Mammary epithelial cell (primary cell): ENCODE measurements at regions of chr18 and their contacts with region 1.

Region 1: DNA sequence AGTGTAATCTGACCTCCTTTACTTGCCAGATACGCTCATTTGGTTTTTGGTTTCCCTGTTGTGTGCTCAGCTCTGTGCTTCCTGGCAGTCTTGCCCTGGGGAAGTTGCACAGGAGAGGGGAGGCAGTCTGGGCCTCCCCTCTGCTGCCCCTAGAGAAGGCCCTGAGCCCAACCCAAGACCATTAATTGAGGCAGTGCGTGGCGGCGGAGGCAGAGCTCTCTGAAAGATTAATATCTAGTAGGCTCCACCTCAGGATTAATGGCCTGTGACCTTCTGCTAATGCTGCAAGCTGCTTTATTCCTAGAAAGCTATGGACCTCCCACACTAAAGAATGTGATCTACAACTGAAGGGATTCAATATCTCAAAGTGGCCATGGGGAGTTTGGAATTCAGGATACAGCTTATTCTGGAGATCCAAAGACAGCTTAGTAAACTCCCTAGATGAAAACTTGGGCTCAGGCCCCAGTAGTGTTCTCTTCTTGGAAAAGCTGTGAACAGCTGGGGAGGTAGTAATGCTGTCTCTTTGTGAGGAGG is 41.4 kb upstream of the MAPRE2 start:
- DNase-seq: no peak
- H3K4me3 ChIP-seq: no peak overlapping the region
- H3K27ac ChIP-seq: no peak overlapping the region
- H3K4me1 ChIP-seq: no peaks in the 10 kb centered on the region
- H3K27me3 ChIP-seq: peaks cover 2% of the 10 kb centered on the region
- CTCF ChIP-seq: no peak

Region 2: DNA sequence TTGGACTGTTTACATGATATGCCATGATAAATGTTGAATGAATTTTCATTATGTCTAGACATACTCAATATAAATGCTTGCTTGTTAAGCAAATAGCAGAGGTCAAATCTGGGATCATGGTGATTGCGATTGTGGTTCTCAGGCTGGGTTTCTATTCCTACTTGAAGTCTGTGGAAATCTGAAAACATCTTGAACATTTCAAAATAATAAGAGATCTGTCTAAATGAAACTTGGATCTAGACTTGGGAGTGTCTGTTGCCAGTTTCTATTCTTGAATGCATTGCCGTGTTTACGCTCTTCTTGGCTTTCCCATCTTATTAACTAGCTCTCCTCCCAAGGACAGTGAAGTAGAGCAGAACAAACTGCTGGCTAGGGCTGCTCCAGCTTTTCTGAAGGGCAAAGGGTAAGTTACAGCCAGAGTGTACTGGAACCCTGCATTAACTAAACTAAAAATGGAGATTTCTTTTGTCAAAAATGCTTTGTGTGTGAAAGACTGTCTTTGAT is 162.0 kb before region 1 on chr18:
- CTCF ChIA-PET with region 1: no interaction called
- dilution Hi-C with region 1: no loop called
- in situ Hi-C with region 1: no loop called
- intact Hi-C with region 1: no loop called
- DNase-seq: no peak
- H3K4me3 ChIP-seq: no peak overlapping the region
- H3K27ac ChIP-seq: no peak overlapping the region
- H3K4me1 ChIP-seq: no peaks in the 10 kb centered on the region
- H3K27me3 ChIP-seq: no peaks in the 10 kb centered on the region
- CTCF ChIP-seq: no peak

Region 3: DNA sequence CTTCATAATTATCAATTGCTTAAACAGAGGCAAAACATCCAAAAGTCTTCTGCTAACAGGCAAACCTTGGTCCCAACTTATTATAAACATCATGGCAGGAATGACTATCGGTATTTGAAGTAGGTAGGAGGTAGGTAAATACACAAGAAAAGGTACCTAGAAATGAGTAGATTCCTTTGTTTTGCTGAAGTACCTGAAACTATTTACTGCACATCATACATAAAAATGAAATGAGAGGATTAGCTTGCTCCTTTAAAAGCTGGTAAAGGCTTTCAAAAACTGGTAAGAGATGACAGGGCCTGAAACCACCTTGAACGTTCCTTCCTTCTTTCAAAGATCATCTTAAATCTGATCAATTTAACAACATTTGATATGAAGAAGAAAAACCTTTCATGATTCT is 13.9 kb before region 1 on chr18:
- CTCF ChIA-PET with region 1: no interaction called
- dilution Hi-C with region 1: no loop called
- in situ Hi-C with region 1: no loop called
- intact Hi-C with region 1: no loop called
- DNase-seq: no peak
- H3K4me3 ChIP-seq: no peak overlapping the region
- H3K27ac ChIP-seq: no peak overlapping the region
- H3K4me1 ChIP-seq: peaks cover 4% of the 10 kb centered on the region
- H3K27me3 ChIP-seq: no peaks in the 10 kb centered on the region
- CTCF ChIP-seq: no peak

Region 4: DNA sequence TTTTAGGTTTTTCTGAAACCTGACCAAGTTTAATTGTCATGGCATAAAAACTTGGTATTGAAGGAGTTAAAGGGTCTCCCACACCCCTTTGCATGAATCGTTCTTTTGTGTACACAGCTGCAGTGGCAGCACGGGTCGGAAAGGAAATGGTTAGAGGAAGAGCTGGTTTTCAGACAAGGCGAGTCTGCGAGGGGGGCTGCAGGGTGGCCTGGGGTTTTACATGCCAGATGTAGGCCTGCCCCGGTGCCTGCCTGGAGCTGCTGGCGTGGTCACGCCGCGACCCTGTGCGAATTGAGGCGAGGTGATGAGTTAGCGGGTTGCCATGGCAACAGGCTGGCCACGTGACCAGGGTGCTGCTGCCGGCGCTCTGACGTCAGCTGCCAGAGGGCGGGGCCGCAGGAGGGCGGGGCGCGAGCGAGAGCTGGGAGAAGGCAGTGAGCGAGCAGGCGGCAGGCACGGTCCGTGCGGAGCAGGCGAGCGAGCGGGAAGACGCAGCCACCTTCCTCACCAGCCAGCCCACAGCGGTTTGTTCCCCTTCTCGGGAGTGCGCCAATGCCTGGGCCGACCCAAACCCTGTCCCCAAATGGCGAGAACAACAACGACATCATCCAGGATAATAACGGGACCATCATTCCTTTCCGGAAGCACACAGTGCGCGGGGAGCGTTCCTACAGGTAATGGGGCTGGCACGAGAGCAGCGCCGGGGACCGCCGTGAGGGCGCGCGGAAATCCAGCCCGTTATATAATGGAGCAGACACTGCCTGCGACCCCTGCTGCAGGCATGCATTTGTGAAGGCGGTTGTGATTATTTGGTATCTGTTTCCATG is 41.4 kb after region 1 on chr18 and contains the start of gene MAPRE2:
- CTCF ChIA-PET with region 1: no interaction called
- dilution Hi-C with region 1: no loop called
- in situ Hi-C with region 1: no loop called
- intact Hi-C with region 1: loop called (anchors 10 kb)
- DNase-seq: peak; percentile 94
- H3K4me3 ChIP-seq: peak within 1 kb of the TSS; percentile 80 to 88 (median 83)
- H3K27ac ChIP-seq: peak within 1 kb of the TSS; percentile 84
- H3K4me1 ChIP-seq: peaks cover 14% of the 10 kb centered on the region
- H3K27me3 ChIP-seq: no peaks in the 10 kb centered on the region
- CTCF ChIP-seq: no peak
- total RNA-seq, gene MAPRE2: 5.0 to 7.3 TPM

Region 5: DNA sequence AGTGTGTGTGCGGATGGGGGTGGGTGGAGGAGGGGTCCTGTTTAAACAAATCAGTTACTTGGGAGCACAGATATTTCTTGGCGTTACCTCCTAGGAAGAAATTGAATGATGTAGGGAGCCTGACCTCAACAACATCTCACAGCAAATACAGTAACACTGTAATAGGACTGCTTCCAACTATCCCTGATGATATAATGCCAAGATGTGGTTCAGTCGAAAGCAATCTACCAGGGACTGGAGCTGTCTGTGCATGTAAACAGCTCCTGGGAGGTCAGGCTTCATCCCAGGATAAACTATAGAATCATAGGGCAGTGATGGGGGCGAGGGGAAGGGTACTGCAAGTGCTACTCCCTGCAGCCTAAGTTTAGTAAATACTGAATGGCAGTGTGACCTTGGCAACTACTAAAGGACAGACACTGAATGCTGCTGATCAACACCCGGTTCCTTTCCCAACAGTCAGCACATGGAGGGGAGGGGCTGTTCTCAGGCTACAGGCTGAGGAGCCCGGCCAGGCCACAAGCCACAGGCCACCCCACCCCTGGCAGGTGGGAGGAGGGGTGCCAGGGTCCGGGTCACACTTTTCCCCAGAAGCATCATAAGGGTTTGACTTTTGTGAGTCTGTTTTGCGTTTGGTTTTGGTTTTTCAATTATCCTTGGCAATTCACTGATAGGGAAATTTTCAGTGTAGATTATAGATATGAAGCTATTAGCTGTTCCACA is 155.7 kb after region 1 on chr18:
- CTCF ChIA-PET with region 1: no interaction called
- dilution Hi-C with region 1: no loop called
- in situ Hi-C with region 1: no loop called
- intact Hi-C with region 1: no loop called
- DNase-seq: no peak
- H3K4me3 ChIP-seq: no peak overlapping the region
- H3K27ac ChIP-seq: no peak overlapping the region
- H3K4me1 ChIP-seq: no peaks in the 10 kb centered on the region
- H3K27me3 ChIP-seq: no peaks in the 10 kb centered on the region
- CTCF ChIP-seq: no peak